ENCODE measurements at regions of chr4 and their contacts with region 1.

Region 1: DNA sequence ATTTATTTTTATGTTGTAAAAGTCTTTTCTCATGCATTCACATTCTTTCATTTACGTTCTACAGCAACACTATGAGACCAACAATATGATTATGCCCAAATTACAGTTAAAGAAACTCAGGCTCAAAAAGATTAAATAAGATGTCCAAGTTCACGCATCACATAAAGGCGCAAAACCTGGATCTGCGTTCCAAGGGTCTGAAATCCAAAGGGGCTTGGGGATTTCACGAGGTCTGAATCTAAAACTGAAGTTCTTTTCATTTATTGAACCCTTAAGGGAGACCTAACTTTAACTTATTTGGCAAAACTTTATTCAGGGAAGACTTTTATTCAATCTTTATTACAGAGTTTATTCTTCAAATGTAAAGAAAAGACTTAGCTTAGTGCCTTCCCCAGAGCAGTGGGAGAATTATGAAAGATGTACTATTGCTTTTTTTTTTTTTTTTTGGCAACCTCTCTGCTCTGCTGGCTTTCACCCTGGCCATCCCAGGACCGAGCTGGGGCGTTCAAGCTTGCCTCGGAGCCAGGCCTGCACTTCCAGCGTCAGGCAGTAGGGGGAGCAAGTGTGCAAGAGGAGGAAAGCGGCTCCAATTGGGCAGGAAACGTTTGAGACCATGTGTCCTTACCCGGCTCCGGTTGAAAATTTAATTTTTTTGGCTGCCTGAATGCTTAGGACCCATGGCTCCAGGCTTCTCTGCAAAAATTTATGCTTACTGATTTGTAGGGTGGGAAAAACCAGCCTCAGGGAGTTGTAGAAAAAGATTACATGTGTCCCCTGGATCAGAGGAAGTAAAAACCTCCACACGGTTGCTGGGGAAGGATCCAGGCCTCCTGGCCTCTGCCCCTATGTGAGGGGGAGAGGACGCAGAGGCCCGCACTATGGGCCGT is 344.3 kb upstream of the KLF3 start:
- DNase-seq: peak; percentile 97
- H3K4me3 ChIP-seq: peak overlapping the region; percentile 7 to 36 (median 26)
- H3K27ac ChIP-seq: peak overlapping the region; percentile 74 to 91 (median 85)
- H3K4me1 ChIP-seq: peaks cover 0 to 21% (median 17%) of the 10 kb centered on the region in 4 donors
- H3K27me3 ChIP-seq: no peaks in the 10 kb centered on the region
- CTCF ChIP-seq: peak; percentile 93 to 99 (median 98)
- EP300 ChIP-seq: no peak
- POLR2A ChIP-seq: no peak

Region 2: GRCh38 chr4:38179690-38180377 is 139.9 kb before region 1 on chr4:
- intact Hi-C with region 1: loop called (anchors 5 kb)
- DNase-seq: peak; percentile 87
- H3K4me3 ChIP-seq: no peak overlapping the region
- H3K27ac ChIP-seq: peak overlapping the region in 2 of 4 donors; percentile 6 to 43
- H3K4me1 ChIP-seq: peaks cover 0 to 19% (median 8%) of the 10 kb centered on the region in 4 donors
- H3K27me3 ChIP-seq: no peaks in the 10 kb centered on the region
- CTCF ChIP-seq: peak; percentile 67 to 91 (median 86)
- EP300 ChIP-seq: no peak
- POLR2A ChIP-seq: no peak

Region 3: GRCh38 chr4:38730830-38731646 is 411.3 kb after region 1 on chr4:
- intact Hi-C with region 1: loop called (anchors 2 kb)
- DNase-seq: peak; percentile 87
- H3K4me3 ChIP-seq: no peak overlapping the region
- H3K27ac ChIP-seq: no peak overlapping the region
- H3K4me1 ChIP-seq: peaks cover 0 to 9% (median 7%) of the 10 kb centered on the region in 4 donors
- H3K27me3 ChIP-seq: no peaks in the 10 kb centered on the region
- CTCF ChIP-seq: peak; percentile 91 to 98 (median 97)
- EP300 ChIP-seq: peak in 1 of 4 donors; percentile 4
- POLR2A ChIP-seq: no peak